K562 (cell line): ENCODE measurements at regions of chr6 and their contacts with region 1.

Region 1: DNA sequence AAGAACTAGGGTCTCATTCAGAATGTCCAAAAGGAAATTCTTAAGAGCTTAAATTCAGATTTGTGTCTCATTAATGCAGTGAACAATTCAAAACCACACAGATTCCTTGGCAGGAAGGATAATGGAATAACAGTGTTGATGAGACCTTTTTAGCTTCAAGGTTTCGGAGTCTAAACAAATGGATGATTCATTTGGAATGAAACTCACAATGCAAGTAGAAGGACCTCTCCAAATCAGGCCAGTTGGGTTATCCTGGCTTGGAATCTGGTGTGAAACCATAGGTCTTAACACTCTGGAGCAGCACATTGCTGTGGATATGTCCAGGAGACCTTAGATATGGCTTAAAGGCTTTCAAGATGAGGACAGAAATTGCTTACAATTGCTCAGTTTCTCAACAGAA is 44.9 kb downstream of the KCTD20 start:
- DNase-seq: no peak
- ATAC-seq: no peak
- H3K4me3 ChIP-seq: no peak overlapping the region
- H3K27ac ChIP-seq: no peak overlapping the region
- H3K4me1 ChIP-seq: no peaks in the 10 kb centered on the region
- H3K27me3 ChIP-seq: no peaks in the 10 kb centered on the region
- CTCF ChIP-seq: no peak
- EP300 ChIP-seq: no peak
- POLR2A ChIP-seq: no peak
- RAD21 ChIP-seq: no peak

Region 2: DNA sequence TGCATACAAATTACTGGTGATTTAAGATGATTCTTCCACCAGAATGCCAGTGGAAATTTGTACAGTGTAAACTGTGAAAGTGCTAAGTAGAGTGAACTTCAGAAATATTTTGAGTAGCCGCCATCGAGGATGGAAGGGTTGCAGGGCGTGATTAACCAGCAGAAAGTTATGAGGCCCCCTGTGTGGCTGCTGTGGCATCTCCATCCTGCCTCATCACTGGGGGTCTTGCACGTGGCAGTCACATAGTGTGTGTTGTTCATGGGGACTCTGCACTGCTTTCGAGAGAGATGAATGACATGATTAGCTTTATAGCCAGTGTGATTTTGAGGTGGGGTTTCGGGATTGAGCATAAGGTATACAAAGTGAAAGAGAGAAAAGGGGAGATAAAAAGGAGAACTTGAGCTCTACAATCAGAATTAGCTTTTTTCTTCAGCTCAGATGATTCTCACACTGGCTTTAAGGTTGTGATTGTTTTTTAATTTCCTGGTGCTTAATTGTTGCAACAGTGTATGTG is 18.5 kb before region 1 on chr6:
- CTCF ChIA-PET with region 1: no interaction called
- POLR2A ChIA-PET with region 1: interaction called, 11 read pairs
- in situ Hi-C with region 1: no loop called
- intact Hi-C with region 1: no loop called
- DNase-seq: no peak
- ATAC-seq: no peak
- H3K4me3 ChIP-seq: no peak overlapping the region
- H3K27ac ChIP-seq: no peak overlapping the region
- H3K4me1 ChIP-seq: no peaks in the 10 kb centered on the region; a peak in 1 of 5 replicates
- H3K27me3 ChIP-seq: no peaks in the 10 kb centered on the region
- CTCF ChIP-seq: no peak
- EP300 ChIP-seq: no peak
- POLR2A ChIP-seq: no peak
- RAD21 ChIP-seq: no peak